A549 (cell line): ENCODE measurements at regions of chr2 and their contacts with region 1.

Region 1: DNA sequence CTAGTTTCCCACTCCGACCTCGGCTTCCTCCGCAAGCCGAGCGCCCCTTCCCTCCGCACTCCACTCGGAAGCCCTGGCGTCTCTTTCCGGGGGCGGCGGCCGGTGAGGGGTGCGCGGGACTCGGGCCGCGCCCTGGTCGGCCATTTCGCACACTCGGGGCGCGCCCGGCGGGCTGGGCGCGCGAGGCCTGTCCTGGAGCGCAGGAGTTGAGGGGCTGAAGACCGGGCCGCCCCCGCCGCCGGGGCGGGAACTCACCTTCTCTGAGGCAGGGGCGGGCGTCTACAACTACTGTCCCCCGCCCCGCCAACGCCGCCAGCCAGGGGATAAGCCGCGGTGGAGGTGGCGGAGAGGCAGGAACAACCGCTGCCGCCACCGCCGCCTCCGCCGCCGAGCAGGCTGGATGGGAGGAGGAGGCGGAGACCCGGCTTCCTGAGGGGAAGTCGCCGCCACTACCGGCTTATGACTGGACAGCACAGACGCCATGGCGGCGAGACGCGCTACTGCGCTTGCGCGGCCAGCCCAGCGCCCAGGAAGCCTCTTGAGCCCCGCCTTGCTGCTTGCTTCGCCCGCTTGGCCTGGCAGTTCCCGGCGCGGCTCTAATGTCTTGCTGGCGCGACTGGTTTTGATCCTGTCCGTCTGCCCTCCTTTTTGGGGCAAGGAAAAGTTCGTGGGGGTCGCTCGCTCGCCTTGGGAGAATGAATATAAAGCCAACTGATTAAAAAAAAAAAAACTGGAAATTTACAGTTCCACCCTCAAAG is at the start of gene KRCC1:
- DNase-seq: peak; percentile 92 to 98
- ATAC-seq: peak; percentile 91 to 97
- H3K4me3 ChIP-seq: peak within 1 kb of the TSS; percentile 81
- H3K27ac ChIP-seq: peak within 1 kb of the TSS; percentile 96 to 100
- H3K4me1 ChIP-seq: peaks cover 24% of the 10 kb centered on the region
- CTCF ChIP-seq: no peak
- EP300 ChIP-seq: no peak
- POLR2A ChIP-seq: peak; percentile 94
- RAD21 ChIP-seq: 0 out of 5 replicates have a peak, but pooled peaks of 1 of the 2 experiments have one; percentile 16
- polyA plus RNA-seq, gene KRCC1: 37.2 and 49.0 TPM in 2 replicates

Region 2: GRCh38 chr2:88003074-88003755 is 52.3 kb before region 1 on chr2:
- CTCF ChIA-PET with region 1: interaction called, 13 read pairs
- POLR2A ChIA-PET with region 1: no interaction called
- DNase-seq: no peak
- ATAC-seq: no peak
- H3K4me3 ChIP-seq: no peak overlapping the region
- H3K27ac ChIP-seq: no peak overlapping the region
- H3K4me1 ChIP-seq: no peaks in the 10 kb centered on the region
- CTCF ChIP-seq: no peak
- EP300 ChIP-seq: no peak
- POLR2A ChIP-seq: no peak
- RAD21 ChIP-seq: no peak

Region 3: DNA sequence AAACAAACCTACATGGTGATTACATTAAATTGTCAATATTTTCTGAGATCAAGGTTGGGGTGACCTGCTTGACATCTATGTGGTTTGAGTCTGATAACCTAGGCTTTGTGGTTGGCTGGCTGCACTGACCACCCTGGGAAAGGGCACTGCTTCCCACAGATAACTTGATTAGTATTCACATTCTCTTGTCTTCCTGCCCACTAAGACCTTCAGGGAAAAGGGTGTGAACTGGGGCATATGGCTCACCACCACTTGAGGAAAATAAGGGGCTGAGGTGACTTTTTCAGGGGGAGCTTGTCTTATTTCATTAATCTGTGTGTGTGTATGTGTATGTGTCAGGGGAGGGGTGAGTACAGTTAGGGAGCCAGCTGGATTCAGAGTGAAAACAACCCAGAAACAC is 13.6 kb after region 1 on chr2:
- CTCF ChIA-PET with region 1: interaction called, 18 read pairs
- POLR2A ChIA-PET with region 1: no interaction called
- DNase-seq: no peak
- ATAC-seq: no peak
- H3K4me3 ChIP-seq: no peak overlapping the region
- H3K27ac ChIP-seq: no peak overlapping the region
- H3K4me1 ChIP-seq: no peaks in the 10 kb centered on the region
- CTCF ChIP-seq: no peak
- EP300 ChIP-seq: no peak
- POLR2A ChIP-seq: no peak
- RAD21 ChIP-seq: no peak

Region 4: GRCh38 chr2:88082781-88083180 is 27.2 kb after region 1 on chr2:
- CTCF ChIA-PET with region 1: interaction called, 45 read pairs
- POLR2A ChIA-PET with region 1: no interaction called
- DNase-seq: no peak
- ATAC-seq: no peak
- H3K4me3 ChIP-seq: no peak overlapping the region
- H3K27ac ChIP-seq: no peak overlapping the region
- H3K4me1 ChIP-seq: no peaks in the 10 kb centered on the region
- CTCF ChIP-seq: no peak
- EP300 ChIP-seq: no peak
- POLR2A ChIP-seq: no peak
- RAD21 ChIP-seq: no peak

Region 5: DNA sequence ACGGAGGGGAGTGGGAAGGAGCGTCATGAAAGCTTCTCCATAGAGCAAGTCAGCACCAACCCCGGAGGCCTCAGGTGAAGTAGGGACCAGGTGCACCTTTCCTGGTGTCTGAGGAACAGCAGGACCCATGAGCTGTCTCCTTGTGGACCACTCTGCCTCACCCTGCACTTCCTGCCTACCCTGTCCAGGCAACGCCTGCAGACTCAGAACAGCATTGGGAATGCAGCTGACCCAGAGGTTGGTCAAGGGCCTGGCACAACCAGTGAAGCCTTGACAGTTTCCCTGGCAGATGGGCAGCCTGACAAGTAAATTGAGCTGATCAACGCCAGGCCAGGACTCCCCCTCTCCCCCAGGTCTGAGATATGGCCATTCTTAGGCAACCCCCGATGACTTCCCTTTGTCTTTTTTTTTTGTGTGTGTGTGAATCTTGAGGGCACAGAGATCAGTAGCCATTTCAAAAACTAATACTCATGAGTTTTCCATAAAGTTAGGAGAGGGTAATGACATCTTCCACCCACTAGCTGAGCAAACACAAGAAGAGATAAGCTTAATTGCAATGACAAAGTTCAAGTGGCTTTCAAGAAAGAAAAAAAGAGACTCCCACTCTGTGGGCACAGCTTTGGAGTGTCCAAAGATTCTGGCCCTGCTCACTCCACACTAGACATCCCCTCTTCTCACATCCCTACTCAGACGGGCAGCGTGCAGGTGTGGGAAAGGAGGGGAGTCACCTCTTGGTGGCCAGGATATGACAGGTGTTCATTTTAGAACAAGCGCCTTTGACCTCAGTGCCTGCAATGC is 75.8 kb after region 1 on chr2:
- CTCF ChIA-PET with region 1: interaction called, 19 read pairs
- POLR2A ChIA-PET with region 1: no interaction called
- DNase-seq: no peak
- ATAC-seq: no peak
- H3K4me3 ChIP-seq: no peak overlapping the region
- H3K27ac ChIP-seq: no peak overlapping the region
- H3K4me1 ChIP-seq: no peaks in the 10 kb centered on the region
- CTCF ChIP-seq: no peak
- EP300 ChIP-seq: no peak
- POLR2A ChIP-seq: no peak
- RAD21 ChIP-seq: no peak

Region 6: DNA sequence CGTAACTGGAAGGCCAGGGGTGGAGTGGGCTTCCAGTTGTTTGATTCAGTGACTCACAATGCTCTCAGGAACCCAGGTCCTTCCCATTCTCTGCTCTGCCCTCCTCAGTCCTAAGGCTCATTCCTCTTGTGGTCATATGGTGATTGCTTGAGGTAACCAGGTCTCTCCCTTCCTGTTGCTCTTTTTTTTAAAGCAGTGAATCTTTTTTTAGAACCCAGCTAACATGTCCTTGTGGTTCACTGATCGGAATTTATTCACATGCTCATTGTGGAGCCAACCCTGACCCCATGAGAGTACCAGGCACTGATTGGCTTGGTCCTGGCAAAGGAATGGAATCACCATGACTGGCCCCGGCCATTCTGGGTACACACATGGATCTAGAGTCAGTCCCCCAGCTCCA is 122.0 kb after region 1 on chr2:
- CTCF ChIA-PET with region 1: interaction called, 12 read pairs
- POLR2A ChIA-PET with region 1: no interaction called
- DNase-seq: no peak
- ATAC-seq: no peak
- H3K4me3 ChIP-seq: no peak overlapping the region
- H3K27ac ChIP-seq: no peak overlapping the region
- H3K4me1 ChIP-seq: no peaks in the 10 kb centered on the region
- CTCF ChIP-seq: no peak
- EP300 ChIP-seq: no peak
- POLR2A ChIP-seq: no peak
- RAD21 ChIP-seq: no peak

Region 7: GRCh38 chr2:88212251-88212790 is 156.8 kb after region 1 on chr2:
- CTCF ChIA-PET with region 1: no interaction called
- POLR2A ChIA-PET with region 1: no interaction called
- DNase-seq: peak in 1 of 2 experiments; percentile 29
- ATAC-seq: peak; percentile 72 to 81; a peak in 3 of 6 replicates
- H3K4me3 ChIP-seq: no peak overlapping the region
- H3K27ac ChIP-seq: no peak overlapping the region
- H3K4me1 ChIP-seq: no peaks in the 10 kb centered on the region
- CTCF ChIP-seq: 0 out of 3 replicates have a peak, but pooled peaks have one; percentile 15
- EP300 ChIP-seq: no peak
- POLR2A ChIP-seq: no peak
- RAD21 ChIP-seq: no peak

Region 8: GRCh38 chr2:88265349-88266303 is 210.1 kb after region 1 on chr2:
- CTCF ChIA-PET with region 1: no interaction called
- POLR2A ChIA-PET with region 1: no interaction called
- DNase-seq: peak; percentile 18 to 30
- ATAC-seq: no peak
- H3K4me3 ChIP-seq: no peak overlapping the region
- H3K27ac ChIP-seq: no peak overlapping the region
- H3K4me1 ChIP-seq: 0 out of 3 replicates have a peak, but pooled peaks cover 4% of the 10 kb centered on the region
- CTCF ChIP-seq: no peak
- EP300 ChIP-seq: no peak
- POLR2A ChIP-seq: no peak
- RAD21 ChIP-seq: no peak

Region 9: GRCh38 chr2:88500695-88501094 is 445.1 kb after region 1 on chr2:
- CTCF ChIA-PET with region 1: no interaction called
- POLR2A ChIA-PET with region 1: no interaction called
- DNase-seq: peak in 1 of 2 experiments; percentile 22
- ATAC-seq: no peak
- H3K4me3 ChIP-seq: no peak overlapping the region
- H3K27ac ChIP-seq: no peak overlapping the region
- H3K4me1 ChIP-seq: no peaks in the 10 kb centered on the region
- CTCF ChIP-seq: no peak
- EP300 ChIP-seq: no peak
- POLR2A ChIP-seq: no peak
- RAD21 ChIP-seq: no peak